ENCODE measurements at regions of chr20 and their contacts with region 1.

Region 1: DNA sequence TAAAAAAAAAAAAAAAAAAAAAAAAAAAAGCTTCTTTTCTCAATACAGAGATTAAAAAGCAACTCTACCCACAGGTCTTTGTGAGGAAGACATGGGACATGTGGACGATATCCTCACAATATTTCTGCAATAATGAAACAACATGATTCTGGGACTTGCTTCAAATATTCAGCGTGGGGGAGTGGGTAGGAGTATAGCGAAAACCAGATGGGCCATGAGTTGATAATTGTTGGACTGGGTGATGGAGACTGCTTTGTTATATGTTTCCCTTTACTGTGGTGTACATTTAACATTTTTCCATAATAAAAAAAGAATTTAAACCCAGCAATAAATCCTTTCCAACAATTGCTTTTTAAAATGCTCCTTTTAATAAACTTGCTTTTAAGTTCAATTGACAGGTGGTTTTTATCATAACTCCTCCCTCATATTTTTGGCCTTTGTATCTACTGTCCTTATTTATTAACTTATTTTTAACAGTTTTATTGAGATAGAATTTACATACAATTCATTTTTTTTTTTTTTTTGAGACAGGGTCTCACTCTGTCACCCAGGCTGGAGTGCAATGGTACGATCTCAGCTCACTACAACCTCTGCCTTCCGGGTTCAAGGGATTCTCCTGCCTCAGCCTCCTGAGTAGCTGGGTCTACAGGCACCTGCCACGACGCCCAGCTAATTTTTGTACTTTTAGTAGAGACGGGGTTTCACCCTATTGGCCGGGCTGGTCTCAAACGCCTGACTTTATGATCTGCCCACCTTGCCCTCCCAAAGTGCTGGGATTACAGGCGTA is 40.3 kb upstream of the ARFGEF2 start:
- DNase-seq: no peak
- H3K4me3 ChIP-seq: no peak overlapping the region
- H3K27ac ChIP-seq: no peak overlapping the region
- H3K4me1 ChIP-seq: peaks cover 21% of the 10 kb centered on the region
- H3K27me3 ChIP-seq: no peaks in the 10 kb centered on the region
- CTCF ChIP-seq: no peak

Region 2: DNA sequence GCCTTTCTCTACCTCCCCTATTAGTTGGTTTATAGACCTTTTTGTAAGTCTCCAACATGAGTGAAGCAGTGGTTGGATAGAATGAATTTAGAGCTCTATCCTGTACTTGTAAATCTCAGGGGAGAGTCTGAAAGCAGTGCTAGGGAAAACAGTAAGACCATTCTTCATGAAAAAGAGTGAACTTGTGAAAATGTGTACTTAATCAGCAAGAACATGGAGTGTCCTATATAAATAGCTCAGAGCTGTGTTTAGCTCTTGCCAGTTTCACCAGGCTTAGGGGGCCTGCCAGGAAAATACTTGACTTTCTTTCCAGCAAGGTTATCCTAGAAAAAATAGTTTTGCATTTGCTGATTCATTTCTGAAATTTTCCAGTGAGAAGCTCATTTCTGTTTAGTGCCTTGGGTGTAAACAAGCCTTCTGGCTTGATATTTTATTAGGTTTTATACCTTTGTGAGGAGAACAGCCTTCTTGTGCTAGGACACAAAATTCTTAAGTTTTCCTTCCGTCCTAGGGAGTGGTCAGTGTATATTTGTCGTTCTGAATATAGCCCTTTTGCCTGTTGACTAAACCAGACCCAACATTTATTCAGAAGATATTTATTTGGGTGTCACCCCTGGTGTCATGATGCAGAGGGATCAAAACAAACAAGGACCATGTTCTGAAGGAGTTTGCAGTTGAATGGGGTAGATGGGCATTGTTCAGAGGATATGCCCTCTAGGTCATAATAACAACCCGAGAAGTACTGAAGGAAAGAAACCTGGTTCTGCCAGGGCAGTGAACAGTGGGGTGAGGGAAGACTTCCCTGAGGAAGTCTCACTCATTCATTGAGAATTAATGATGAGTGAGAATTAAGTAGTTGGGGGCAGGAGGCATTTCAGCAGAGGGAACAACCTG is 47.9 kb after region 1 on chr20:
- CTCF ChIA-PET with region 1: no interaction called
- POLR2A ChIA-PET with region 1: interaction called, 19 read pairs
- intact Hi-C with region 1: no loop called
- DNase-seq: no peak
- H3K4me3 ChIP-seq: no peak overlapping the region
- H3K27ac ChIP-seq: no peak overlapping the region
- H3K4me1 ChIP-seq: peaks cover 15% of the 10 kb centered on the region
- H3K27me3 ChIP-seq: no peaks in the 10 kb centered on the region
- CTCF ChIP-seq: no peak